A549 (cell line): ENCODE measurements at regions of chr12 and their contacts with region 1.

Region 1: GRCh38 chr12:102797528-102797927 is 119.5 kb downstream of the PAH start:
- DNase-seq: no peak
- ATAC-seq: no peak
- H3K4me3 ChIP-seq: no peak overlapping the region
- H3K27ac ChIP-seq: no peak overlapping the region
- H3K4me1 ChIP-seq: no peaks in the 10 kb centered on the region
- CTCF ChIP-seq: no peak
- EP300 ChIP-seq: no peak
- POLR2A ChIP-seq: no peak
- RAD21 ChIP-seq: no peak

Region 2: GRCh38 chr12:102811110-102811737 is 13.7 kb after region 1 on chr12:
- CTCF ChIA-PET with region 1: interaction called, 16 read pairs
- POLR2A ChIA-PET with region 1: no interaction called
- DNase-seq: peak; percentile 38 to 51
- ATAC-seq: peak; percentile 58 to 87; a peak in 4 of 6 replicates
- H3K4me3 ChIP-seq: no peak overlapping the region
- H3K27ac ChIP-seq: no peak overlapping the region
- H3K4me1 ChIP-seq: no peaks in the 10 kb centered on the region
- CTCF ChIP-seq: peak; percentile 75
- EP300 ChIP-seq: no peak
- POLR2A ChIP-seq: no peak
- RAD21 ChIP-seq: peak; percentile 76 to 82

Region 3: DNA sequence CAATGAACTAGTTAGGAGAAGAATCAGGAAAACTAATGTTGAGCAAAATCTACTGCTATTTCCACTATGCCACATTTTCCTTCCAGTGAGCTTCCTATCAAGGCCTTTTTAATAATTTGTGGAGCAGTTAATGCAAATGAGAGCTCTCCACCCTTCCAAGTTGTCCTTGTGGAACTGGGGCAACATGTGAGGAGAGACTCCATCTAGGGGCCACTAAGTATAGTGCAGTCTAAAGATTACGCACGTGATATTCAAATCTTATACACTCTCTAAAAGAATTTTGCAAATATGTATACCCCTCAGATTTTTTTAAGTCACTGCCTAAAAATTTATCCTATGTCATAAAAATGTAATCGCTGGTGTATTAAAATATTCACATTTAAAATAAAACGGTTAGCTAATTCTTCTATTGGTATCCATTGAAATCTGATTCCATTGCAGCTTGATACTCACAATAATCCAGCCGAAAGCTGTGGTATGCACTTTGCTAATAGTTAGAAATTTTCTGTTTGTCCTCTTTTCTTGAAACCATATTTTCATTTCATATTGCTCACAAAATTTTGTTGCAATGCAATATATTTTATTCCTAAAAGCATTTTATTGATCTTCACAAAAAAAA is 19.4 kb after region 1 on chr12:
- CTCF ChIA-PET with region 1: interaction called, 11 read pairs
- POLR2A ChIA-PET with region 1: no interaction called
- DNase-seq: peak; percentile 15 to 50
- ATAC-seq: peak; percentile 66 to 84; a peak in 4 of 6 replicates
- H3K4me3 ChIP-seq: no peak overlapping the region
- H3K27ac ChIP-seq: no peak overlapping the region
- H3K4me1 ChIP-seq: no peaks in the 10 kb centered on the region
- CTCF ChIP-seq: peak; percentile 52
- EP300 ChIP-seq: no peak
- POLR2A ChIP-seq: no peak
- RAD21 ChIP-seq: peak; percentile 41 to 59; a peak in 4 of 5 replicates